Posterior vena cava (tissue), 2 donors: ENCODE measurements at regions of chr11 and their contacts with region 1.

Region 1: GRCh38 chr11:123246749-123247495 is 51.9 kb upstream of the CLMP start:
- DNase-seq: peak; percentile 94

Region 2: DNA sequence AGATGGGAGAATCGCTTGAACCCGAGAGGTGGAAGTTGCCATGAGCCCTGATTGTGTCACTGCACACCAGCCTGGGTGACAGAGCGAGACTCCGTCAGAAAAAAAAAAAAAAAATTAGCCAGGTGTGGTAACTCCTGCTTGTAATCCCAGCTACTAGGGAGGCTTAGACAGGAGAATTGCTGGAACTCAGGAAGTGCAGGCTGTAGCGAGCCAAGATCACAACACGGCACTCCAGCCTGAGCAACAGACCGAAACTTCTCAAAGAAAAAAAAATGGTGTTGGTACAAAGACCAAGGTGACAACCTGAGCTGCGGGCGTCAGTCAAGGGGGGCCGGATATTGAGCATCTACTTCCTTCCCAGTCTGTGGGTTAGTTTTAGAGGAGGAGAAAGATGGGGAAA is 136.6 kb before region 1 on chr11:
- intact Hi-C with region 1: loop called (anchors 5 kb)
- DNase-seq: no peak